ENCODE measurements at regions of chr5 and their contacts with region 1.

Region 1: DNA sequence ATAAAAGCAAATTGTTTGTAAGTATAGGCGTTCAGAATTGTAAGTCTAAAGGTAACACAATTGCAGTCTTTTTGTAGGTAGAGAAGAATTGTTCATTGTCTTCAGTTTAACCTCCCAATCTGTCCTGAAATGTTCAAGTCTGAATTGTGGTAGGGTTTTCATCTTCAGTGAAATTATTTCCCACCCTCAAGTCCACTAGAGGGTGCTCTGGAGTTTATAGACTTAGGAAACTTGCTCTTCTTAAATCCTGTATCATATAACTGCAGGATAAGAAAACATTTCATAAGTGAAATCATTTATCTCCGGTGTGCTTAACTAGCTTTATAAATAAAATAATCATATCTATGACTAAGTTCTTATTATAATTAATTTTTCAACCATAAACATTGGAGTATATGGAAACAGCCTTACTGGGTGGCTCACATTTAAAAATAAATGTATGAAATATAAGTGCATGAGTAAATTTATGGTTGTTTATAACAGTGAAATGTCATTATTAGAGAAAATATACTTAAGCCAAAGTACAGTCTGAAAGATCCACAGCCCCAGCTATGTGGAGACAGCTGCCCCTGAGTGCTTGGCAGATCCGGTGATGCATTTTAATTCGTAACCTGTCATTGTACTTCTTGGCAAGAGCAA is 182.4 kb upstream of the OTULINL start:
- DNase-seq: no peak
- ATAC-seq: no peak
- H3K4me3 Mint-ChIP-seq: no peak overlapping the region
- H3K27ac Mint-ChIP-seq: no peak overlapping the region
- H3K4me1 Mint-ChIP-seq: no peaks in the 10 kb centered on the region
- H3K27me3 Mint-ChIP-seq: no peaks in the 10 kb centered on the region
- CTCF ChIP-seq: peak; percentile 23

Region 2: DNA sequence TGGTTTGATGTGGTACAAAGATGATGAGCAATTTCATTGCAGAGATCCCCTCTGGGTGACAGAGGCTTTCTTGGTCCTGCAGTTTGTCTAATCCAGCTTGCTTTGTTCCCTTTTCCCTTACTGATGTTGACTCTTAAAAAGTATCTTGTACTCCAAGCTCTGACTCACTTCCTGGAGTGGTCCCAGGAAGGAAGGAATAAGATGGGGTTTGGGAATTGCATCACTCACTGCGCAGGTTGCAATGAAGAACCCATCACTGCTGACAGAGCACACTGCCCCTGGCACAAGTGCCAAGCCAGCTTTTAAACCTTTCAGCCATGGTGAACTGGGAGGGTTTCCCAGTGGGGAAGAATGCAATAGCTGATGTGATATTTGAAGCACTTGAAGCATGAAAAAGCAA is 1832.7 kb before region 1 on chr5:
- CTCF ChIA-PET with region 1: no interaction called
- POLR2A ChIA-PET with region 1: no interaction called
- intact Hi-C with region 1: no loop called
- DNase-seq: no peak
- ATAC-seq: no peak
- H3K4me3 Mint-ChIP-seq: no peak overlapping the region
- H3K27ac Mint-ChIP-seq: no peak overlapping the region
- H3K4me1 Mint-ChIP-seq: no peaks in the 10 kb centered on the region
- H3K27me3 Mint-ChIP-seq: no peaks in the 10 kb centered on the region
- CTCF ChIP-seq: no peak

Region 3: GRCh38 chr5:14476786-14477435 is 77.7 kb after region 1 on chr5:
- CTCF ChIA-PET with region 1: no interaction called
- POLR2A ChIA-PET with region 1: no interaction called
- intact Hi-C with region 1: no loop called
- DNase-seq: no peak
- ATAC-seq: no peak
- H3K4me3 Mint-ChIP-seq: no peak overlapping the region
- H3K27ac Mint-ChIP-seq: no peak overlapping the region
- H3K4me1 Mint-ChIP-seq: no peaks in the 10 kb centered on the region
- H3K27me3 Mint-ChIP-seq: no peaks in the 10 kb centered on the region
- CTCF ChIP-seq: no peak

Region 4: GRCh38 chr5:14581333-14581890 is 182.2 kb after region 1 on chr5 and contains the start of gene OTULINL:
- CTCF ChIA-PET with region 1: no interaction called
- POLR2A ChIA-PET with region 1: no interaction called
- intact Hi-C with region 1: no loop called
- DNase-seq: peak; percentile 80
- ATAC-seq: peak; percentile 98
- H3K4me3 Mint-ChIP-seq: peak within 1 kb of the TSS; percentile 74
- H3K27ac Mint-ChIP-seq: no peak within 1 kb of the TSS
- H3K4me1 Mint-ChIP-seq: peaks cover 3% of the 10 kb centered on the region
- H3K27me3 Mint-ChIP-seq: peaks cover 25% of the 10 kb centered on the region
- CTCF ChIP-seq: no peak
- total RNA-seq, gene OTULINL: 0.27 and 0.69 TPM in 2 replicates

Region 5: GRCh38 chr5:14650052-14650451 is 250.9 kb after region 1 on chr5:
- CTCF ChIA-PET with region 1: interaction called, 62 read pairs
- POLR2A ChIA-PET with region 1: no interaction called
- intact Hi-C with region 1: loop called (anchors 1 kb)
- DNase-seq: no peak
- ATAC-seq: no peak
- H3K4me3 Mint-ChIP-seq: no peak overlapping the region
- H3K27ac Mint-ChIP-seq: no peak overlapping the region
- H3K4me1 Mint-ChIP-seq: peaks cover 2% of the 10 kb centered on the region
- H3K27me3 Mint-ChIP-seq: peaks cover 9% of the 10 kb centered on the region
- CTCF ChIP-seq: no peak

Measured in activated B cell treated with CpG ODN at 0.5 μM for 24 hours (primary cell).